WTC11 (cell line): ENCODE measurements at regions of chr3 and their contacts with region 1.

Region 1: GRCh38 chr3:123642182-123642956 is 57.5 kb upstream of the HACD2 start:
- DNase-seq: peak; percentile 92
- ATAC-seq: peak; percentile 99
- H3K4me3 Mint-ChIP-seq: no peak overlapping the region
- H3K27ac Mint-ChIP-seq: peak overlapping the region; percentile 84
- H3K4me1 Mint-ChIP-seq: peaks cover 33% of the 10 kb centered on the region
- H3K27me3 Mint-ChIP-seq: no peaks in the 10 kb centered on the region
- CTCF ChIP-seq: peak; percentile 90

Region 2: GRCh38 chr3:123508178-123508577 is 134.2 kb before region 1 on chr3:
- CTCF ChIA-PET with region 1: no interaction called
- POLR2A ChIA-PET with region 1: no interaction called
- DNase-seq: no peak
- ATAC-seq: no peak
- H3K4me3 Mint-ChIP-seq: no peak overlapping the region
- H3K27ac Mint-ChIP-seq: no peak overlapping the region
- H3K4me1 Mint-ChIP-seq: peaks cover 18% of the 10 kb centered on the region
- H3K27me3 Mint-ChIP-seq: peaks cover 26% of the 10 kb centered on the region
- CTCF ChIP-seq: no peak

Region 3: GRCh38 chr3:123584988-123585937 is 57.1 kb before region 1 on chr3 and contains the start of gene HACD2:
- CTCF ChIA-PET with region 1: interaction called, 36 read pairs
- POLR2A ChIA-PET with region 1: interaction called, 7 read pairs
- DNase-seq: peak; percentile 98
- ATAC-seq: peak; percentile 93
- H3K4me3 Mint-ChIP-seq: no peak within 1 kb of the TSS
- H3K27ac Mint-ChIP-seq: peak within 1 kb of the TSS; percentile 62
- H3K4me1 Mint-ChIP-seq: peaks cover 28% of the 10 kb centered on the region
- H3K27me3 Mint-ChIP-seq: peaks cover 5% of the 10 kb centered on the region
- CTCF ChIP-seq: no peak
- total RNA-seq, gene HACD2: 25.9 to 27.7 TPM (median 26.1 TPM) in 3 replicates

Region 4: DNA sequence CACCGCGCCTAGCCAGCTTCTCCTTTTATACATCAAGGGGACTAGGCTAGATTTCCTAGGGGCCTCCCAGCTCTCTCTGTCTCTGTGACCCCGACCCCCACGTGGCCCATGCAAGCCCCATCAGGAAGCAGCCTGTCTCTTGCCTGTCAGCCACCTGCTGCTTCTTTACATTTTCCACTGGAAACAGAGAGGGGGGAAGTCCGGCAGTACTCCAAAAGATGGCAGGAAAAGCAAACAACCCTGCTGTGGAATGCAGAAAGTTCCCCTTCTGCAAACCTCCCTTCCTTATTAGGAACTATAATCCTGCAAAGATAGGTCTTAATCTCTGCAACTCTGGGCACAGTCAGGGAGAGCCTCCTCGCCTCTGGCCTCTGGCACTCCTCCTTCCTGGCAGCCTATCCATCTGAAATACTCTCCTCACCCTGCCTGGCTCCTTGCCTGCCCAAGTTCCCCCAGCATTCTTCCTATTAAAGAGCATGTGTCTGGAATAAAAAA is 10.2 kb before region 1 on chr3:
- CTCF ChIA-PET with region 1: interaction called, 29 read pairs
- POLR2A ChIA-PET with region 1: no interaction called
- DNase-seq: peak; percentile 40
- ATAC-seq: peak; percentile 41
- H3K4me3 Mint-ChIP-seq: peak overlapping the region; percentile 4; the same call in 1 of the 2 replicates
- H3K27ac Mint-ChIP-seq: peak overlapping the region; percentile 61
- H3K4me1 Mint-ChIP-seq: peaks cover 60% of the 10 kb centered on the region
- H3K27me3 Mint-ChIP-seq: no peaks in the 10 kb centered on the region; the same call in 1 of the 2 replicates
- CTCF ChIP-seq: no peak

Region 5: DNA sequence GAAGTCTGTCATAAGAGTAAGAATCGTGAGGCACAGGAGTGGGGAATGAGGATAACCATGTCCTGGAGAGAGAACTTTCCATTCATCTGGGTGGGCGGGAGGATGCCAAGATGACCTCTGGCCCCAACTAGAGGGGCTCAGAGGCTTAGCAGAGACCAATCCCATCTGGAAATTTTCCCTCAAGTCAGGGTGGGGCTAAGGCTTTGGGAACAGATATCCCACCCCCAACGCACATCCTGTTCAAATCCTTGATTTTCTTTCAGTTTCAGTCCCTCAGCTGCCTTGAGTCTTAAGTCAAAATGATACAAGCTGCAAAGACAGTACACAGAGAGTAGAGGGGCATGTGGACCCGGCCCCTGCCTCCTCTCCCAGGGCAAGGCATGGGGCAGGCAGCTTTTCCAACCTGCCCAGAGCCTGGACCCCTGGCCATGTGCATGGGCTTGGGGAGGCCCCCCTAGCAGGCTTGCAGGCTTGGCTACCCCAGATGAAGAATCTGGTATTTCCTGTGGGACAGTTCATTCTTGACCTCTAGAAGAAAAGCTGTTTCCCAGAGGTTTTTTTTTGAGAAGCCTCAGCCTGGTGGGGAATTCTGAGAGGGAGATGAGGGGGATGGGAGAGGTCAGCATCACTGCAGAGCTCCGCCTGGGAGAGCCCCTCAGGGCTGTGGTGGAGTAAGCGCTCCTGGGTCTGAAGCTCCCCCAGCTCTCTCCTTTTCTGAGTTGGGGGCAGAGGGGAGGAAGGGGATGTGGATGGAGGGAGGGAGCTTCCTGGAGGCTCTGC is 52.2 kb after region 1 on chr3:
- CTCF ChIA-PET with region 1: interaction called, 20 read pairs
- POLR2A ChIA-PET with region 1: no interaction called
- DNase-seq: no peak
- ATAC-seq: peak; percentile 20
- H3K4me3 Mint-ChIP-seq: no peak overlapping the region
- H3K27ac Mint-ChIP-seq: no peak overlapping the region
- H3K4me1 Mint-ChIP-seq: peaks cover 27% of the 10 kb centered on the region
- H3K27me3 Mint-ChIP-seq: no peaks in the 10 kb centered on the region
- CTCF ChIP-seq: no peak

Region 6: GRCh38 chr3:123706871-123707270 is 64.5 kb after region 1 on chr3:
- CTCF ChIA-PET with region 1: interaction called, 19 read pairs
- POLR2A ChIA-PET with region 1: no interaction called
- DNase-seq: no peak
- ATAC-seq: no peak
- H3K4me3 Mint-ChIP-seq: no peak overlapping the region
- H3K27ac Mint-ChIP-seq: no peak overlapping the region
- H3K4me1 Mint-ChIP-seq: peaks cover 7% of the 10 kb centered on the region
- H3K27me3 Mint-ChIP-seq: no peaks in the 10 kb centered on the region
- CTCF ChIP-seq: no peak